ENCODE measurements at regions of chr22 and their contacts with region 1.

Region 1: GRCh38 chr22:41589391-41590241 is at the start of gene PMM1:
- DNase-seq: peak; percentile 99
- ATAC-seq: peak; percentile 98
- H3K4me3 ChIP-seq: peak within 1 kb of the TSS; percentile 94 to 98
- H3K27ac ChIP-seq: peak within 1 kb of the TSS; percentile 73
- H3K4me1 ChIP-seq: peaks cover 19 to 27% of the 10 kb centered on the region in 2 experiments; a peak in 3 of 4 replicates
- H3K27me3 ChIP-seq: no peaks in the 10 kb centered on the region
- CTCF ChIP-seq: no peak
- POLR2A ChIP-seq: peak; percentile 57
- RAD21 ChIP-seq: no peak
- total RNA-seq, gene PMM1: 31.7 TPM

Region 2: DNA sequence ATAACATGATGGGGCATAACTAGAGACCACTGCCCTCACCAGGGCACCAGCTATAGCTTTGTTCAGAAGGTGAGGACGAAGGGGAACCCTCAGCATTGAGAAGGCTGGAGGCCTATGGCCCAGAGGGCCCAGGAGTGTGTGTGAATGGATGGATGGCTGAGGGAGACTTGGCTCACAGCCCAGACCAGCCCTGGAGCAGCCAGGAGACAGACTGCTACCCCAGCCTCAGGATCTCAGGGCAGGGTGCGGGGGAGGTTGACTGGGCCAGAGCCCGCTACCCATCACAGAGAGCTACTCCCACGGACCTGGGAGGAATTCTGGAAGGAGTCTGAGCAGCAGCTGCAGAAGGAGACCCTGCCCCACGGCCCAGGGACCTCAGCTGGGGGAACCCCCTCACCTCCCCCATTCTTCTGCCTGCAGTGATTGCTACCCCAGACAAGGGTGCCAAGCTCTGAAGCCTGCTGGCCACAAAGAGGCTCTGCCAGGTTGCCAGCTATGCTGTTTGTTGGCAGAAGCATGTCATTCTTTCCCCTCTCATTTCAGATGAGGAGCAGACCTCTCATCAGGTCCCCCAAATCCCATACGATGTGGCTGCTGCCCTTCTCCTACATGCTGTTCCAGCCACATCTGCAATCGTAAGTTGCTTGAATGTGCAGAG is 34.2 kb before region 1 on chr22:
- CTCF ChIA-PET with region 1: interaction called, 4 read pairs
- POLR2A ChIA-PET with region 1: interaction called, 13 read pairs
- RAD21 ChIA-PET with region 1: no interaction called
- intact Hi-C with region 1: no loop called
- DNase-seq: no peak
- ATAC-seq: no peak
- H3K4me3 ChIP-seq: no peak overlapping the region
- H3K27ac ChIP-seq: no peak overlapping the region
- H3K4me1 ChIP-seq: peaks cover 8 to 22% of the 10 kb centered on the region in 2 experiments; a peak in 3 of 4 replicates
- H3K27me3 ChIP-seq: no peaks in the 10 kb centered on the region
- CTCF ChIP-seq: no peak
- POLR2A ChIP-seq: no peak
- RAD21 ChIP-seq: no peak

Region 3: DNA sequence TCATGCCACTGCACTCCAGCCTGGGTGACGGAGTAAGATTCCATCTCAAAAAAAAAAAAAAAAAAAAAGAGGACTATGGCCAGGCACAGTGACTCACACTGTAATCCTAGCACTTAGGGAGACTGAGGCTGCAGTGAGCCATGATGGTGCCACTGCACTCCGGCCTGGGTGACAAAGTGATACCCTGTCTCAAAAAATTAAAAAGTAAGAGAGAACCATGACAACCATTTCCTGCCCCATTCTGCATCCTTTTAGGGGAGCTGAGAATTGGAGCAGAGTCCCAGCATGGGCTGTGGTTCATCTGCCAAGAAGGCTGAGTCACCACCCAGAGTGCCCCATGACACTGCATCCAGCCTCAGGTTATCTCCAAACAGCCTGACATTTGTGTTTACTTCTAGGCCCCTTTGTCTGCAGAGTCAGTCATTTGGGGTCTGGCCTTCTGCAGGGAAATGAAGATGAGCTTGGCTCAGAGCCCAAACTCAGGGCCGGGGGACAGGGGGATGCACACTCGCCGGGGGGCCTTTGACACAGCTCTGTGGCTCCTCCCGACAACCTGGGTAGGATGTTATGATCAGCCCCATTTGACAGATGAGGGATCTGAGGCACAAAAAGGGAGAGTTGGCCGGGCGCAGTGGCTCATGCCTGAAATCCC is 24.1 kb before region 1 on chr22:
- CTCF ChIA-PET with region 1: interaction called, 3 read pairs
- POLR2A ChIA-PET with region 1: interaction called, 16 read pairs
- RAD21 ChIA-PET with region 1: no interaction called
- intact Hi-C with region 1: no loop called
- DNase-seq: peak; percentile 61
- ATAC-seq: peak; percentile 85
- H3K4me3 ChIP-seq: peak overlapping the region in 1 of 2 experiments; percentile 10; a peak in 1 of 4 replicates
- H3K27ac ChIP-seq: peak overlapping the region; percentile 65
- H3K4me1 ChIP-seq: peaks cover 29 to 55% of the 10 kb centered on the region in 2 experiments
- H3K27me3 ChIP-seq: no peaks in the 10 kb centered on the region
- CTCF ChIP-seq: no peak
- POLR2A ChIP-seq: no peak
- RAD21 ChIP-seq: no peak

Region 4: DNA sequence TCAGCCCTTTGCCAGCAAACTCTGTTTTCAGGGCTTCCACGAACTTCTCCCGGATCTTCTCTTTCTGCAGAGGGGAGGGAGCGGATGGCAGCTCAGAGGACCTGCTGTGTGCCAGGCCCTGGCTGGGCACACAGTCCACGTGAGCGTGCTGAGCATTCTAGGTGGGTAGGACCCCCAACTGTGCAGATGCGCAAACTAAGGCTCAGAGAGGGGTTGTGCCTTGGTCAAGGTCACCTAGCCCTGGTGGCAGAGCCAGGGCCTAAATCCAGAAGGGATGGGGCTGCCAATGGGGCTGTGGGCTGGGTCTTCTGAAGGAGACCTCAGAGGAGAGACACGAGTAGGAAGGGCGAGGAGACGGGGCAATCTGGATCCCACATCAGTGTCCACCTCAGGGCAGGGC is 10.8 kb before region 1 on chr22:
- CTCF ChIA-PET with region 1: interaction called, 4 read pairs
- POLR2A ChIA-PET with region 1: interaction called, 10 read pairs
- RAD21 ChIA-PET with region 1: no interaction called
- intact Hi-C with region 1: no loop called
- DNase-seq: no peak
- ATAC-seq: no peak
- H3K4me3 ChIP-seq: no peak overlapping the region
- H3K27ac ChIP-seq: no peak overlapping the region
- H3K4me1 ChIP-seq: no peaks in the 10 kb centered on the region
- H3K27me3 ChIP-seq: no peaks in the 10 kb centered on the region
- CTCF ChIP-seq: no peak
- POLR2A ChIP-seq: no peak
- RAD21 ChIP-seq: no peak

Region 5: DNA sequence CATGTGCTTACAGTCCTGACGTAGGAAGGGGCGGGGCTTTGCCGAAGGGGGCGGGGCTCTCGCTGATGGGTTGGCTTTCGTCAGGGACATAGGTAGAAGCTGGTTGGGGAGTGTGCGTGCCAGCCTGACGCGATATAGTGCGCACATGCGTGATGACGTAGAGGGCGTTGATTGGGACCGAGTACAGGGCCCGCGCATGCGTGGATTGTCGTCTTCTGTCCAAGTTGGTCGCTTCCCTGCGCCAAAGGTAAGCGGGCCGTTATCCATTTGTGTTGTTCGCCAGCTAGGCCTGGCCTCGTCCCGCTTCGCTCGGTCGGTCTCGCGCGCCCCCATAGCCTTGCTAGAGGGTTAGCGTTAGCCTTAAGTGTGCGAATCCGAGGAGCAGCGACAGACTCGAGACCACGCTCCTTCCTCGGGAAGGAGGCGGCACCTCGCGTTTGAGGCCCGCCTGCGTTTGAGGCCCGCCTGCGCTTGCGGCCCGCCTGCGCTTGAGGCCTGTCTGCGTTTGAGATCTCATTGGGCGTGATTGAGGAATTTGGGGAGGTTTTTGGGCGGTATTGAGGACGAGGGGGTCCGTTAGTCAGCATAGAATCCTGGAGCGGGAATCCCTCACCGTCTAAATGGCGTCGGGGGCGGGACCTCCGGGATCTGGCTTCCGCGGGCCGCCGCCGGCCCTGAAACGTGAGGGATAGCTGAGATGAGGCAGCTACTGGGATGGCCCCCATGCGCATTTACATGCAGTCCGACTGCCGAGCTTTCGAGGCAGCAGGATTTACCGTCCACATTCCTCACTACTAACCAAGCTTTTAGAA is 31.7 kb after region 1 on chr22 and contains the start of gene XRCC6:
- CTCF ChIA-PET with region 1: no interaction called
- POLR2A ChIA-PET with region 1: interaction called, 12 read pairs
- RAD21 ChIA-PET with region 1: interaction called in 1 of 2 experiments, 4 read pairs
- intact Hi-C with region 1: no loop called
- DNase-seq: peak; percentile 100
- ATAC-seq: peak; percentile 94
- H3K4me3 ChIP-seq: peak within 1 kb of the TSS; percentile 70 to 100
- H3K27ac ChIP-seq: peak within 1 kb of the TSS; percentile 95
- H3K4me1 ChIP-seq: peaks cover 11 to 16% of the 10 kb centered on the region in 2 experiments
- H3K27me3 ChIP-seq: no peaks in the 10 kb centered on the region
- CTCF ChIP-seq: no peak
- POLR2A ChIP-seq: peak; percentile 71
- RAD21 ChIP-seq: no peak
- total RNA-seq, gene XRCC6: 588 TPM